AG04449 (cell line): ENCODE measurements at regions of chr2 and their contacts with region 1.

Region 1: GRCh38 chr2:186641807-186642321 is 52.0 kb upstream of the FAM171B start:
- DNase-seq: peak; percentile 40
- H3K4me3 ChIP-seq: no peak overlapping the region
- CTCF ChIP-seq: peak; percentile 58

Region 2: DNA sequence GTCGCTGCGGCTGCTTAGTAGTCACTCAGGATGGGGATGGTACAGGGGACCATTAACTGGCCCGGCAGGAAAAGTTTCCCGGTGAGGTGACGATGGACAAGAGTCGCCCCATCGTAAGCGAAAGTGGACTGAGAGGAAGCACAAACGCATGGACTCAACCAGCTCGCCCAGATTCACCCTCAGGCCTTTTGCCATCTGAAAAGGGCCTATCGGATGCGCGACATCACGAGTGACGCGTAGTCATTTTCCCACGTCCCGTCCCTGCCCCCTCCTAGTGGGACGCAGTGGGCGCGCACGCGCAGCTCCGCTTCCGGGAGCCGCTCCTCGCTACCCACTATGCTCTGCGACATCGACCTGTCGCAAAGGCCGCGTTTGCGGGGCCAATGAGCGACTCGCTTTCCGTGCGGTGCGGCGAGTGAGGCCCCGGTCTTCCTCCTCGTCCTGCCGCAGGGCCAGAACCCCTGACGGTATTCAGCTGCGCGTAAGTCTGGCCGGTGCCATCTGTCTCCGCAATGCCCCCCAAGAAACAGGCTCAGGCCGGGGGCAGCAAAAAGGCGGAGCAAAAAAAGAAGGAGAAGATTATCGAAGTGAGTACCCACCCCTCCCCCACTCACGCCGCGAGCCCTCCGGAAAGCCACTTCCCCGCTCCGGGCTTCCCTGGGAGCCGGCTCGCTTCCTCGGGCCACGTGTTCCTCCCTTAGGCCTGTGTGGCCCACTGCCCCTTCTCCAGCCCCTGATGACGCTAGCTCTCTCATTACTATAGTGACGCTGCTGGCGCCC is 155.8 kb before region 1 on chr2 and contains the start of gene ZC3H15:
- CTCF ChIA-PET with region 1: interaction called, 38 read pairs
- POLR2A ChIA-PET with region 1: no interaction called
- DNase-seq: peak; percentile 92
- H3K4me3 ChIP-seq: peak within 1 kb of the TSS; percentile 82
- CTCF ChIP-seq: no peak

Region 3: DNA sequence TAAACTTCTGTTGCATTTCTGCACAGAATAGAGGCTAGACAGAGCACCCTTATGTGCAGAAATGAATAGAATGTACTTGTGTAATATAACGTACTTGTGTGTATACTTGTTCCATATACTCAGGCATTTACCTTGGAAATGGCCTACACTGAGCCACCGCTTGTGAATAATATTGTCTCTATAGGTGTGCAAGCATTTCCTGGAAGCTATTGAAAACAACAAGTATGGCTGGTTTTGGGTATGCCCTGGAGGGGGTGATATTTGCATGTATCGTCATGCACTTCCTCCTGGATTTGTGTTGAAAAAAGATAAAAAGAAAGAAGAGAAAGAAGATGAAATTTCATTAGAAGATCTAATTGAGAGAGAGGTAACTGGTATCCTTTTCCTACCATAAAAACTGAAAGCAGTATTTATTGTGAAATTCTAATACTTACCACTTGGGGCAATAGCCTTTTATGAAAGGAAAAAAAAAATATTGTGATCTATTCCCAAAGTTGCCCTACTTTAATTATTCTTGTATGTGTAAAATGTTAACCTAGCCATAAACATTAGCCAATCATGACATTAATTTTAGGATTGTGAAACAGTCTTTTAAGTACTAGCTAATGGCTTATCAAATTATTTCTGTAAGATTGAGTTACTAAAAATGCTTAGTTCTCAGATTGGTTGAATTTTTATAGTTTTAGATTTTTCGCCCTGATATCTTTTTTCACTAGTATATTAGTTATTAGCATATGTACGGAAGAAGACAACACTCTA is 137.8 kb before region 1 on chr2:
- CTCF ChIA-PET with region 1: interaction called, 347 read pairs
- POLR2A ChIA-PET with region 1: interaction called, 4 read pairs
- DNase-seq: no peak
- H3K4me3 ChIP-seq: no peak overlapping the region
- CTCF ChIP-seq: no peak

Region 4: GRCh38 chr2:186532891-186533290 is 109.0 kb before region 1 on chr2:
- CTCF ChIA-PET with region 1: interaction called, 11 read pairs
- POLR2A ChIA-PET with region 1: no interaction called
- DNase-seq: no peak
- H3K4me3 ChIP-seq: no peak overlapping the region
- CTCF ChIP-seq: no peak

Region 5: GRCh38 chr2:186607660-186608324 is 34.1 kb before region 1 on chr2:
- CTCF ChIA-PET with region 1: interaction called, 11 read pairs
- POLR2A ChIA-PET with region 1: no interaction called
- DNase-seq: no peak
- H3K4me3 ChIP-seq: no peak overlapping the region
- CTCF ChIP-seq: no peak

Region 6: GRCh38 chr2:187078297-187078696 is 436.4 kb after region 1 on chr2:
- CTCF ChIA-PET with region 1: no interaction called
- POLR2A ChIA-PET with region 1: no interaction called
- DNase-seq: no peak
- H3K4me3 ChIP-seq: no peak overlapping the region
- CTCF ChIP-seq: no peak